ENCODE measurements at regions of chr17 and their contacts with region 1.

Region 1: DNA sequence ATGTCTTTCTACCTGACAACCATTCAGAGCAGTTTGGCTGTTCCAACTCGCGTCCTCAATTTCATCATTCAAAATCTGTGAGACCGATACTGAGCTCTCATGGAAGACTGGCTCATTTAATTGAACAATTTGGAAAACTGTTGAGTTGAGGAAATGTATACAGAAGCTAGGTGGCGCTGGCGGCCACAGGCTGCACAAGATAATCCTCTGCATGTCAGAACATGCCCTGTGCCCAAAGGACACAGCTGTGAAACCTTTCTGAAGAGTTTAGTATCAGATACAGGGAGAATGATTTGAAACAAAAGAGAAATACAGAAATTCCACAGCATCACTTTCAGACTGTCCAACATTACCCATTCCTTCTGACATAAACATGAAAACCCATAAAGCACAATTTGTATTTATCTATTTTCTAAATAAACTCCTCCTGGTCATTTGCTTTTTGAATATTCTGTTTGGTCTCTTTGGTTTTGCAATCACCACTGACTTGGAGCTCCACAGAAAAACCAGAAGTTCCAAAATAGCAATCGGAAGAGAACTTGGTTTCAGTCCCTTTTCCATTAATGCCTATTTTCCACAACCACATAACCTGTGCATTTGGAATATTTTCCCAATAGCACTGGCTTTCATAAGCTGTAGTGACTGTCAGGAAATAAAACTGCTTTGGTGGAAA is 192.8 kb downstream of the MAP2K6 start:
- DNase-seq: peak; percentile 89
- H3K4me3 ChIP-seq: no peak overlapping the region
- H3K27ac ChIP-seq: peak overlapping the region; percentile 92
- H3K4me1 ChIP-seq: peaks cover 28% of the 10 kb centered on the region
- H3K27me3 ChIP-seq: no peaks in the 10 kb centered on the region
- CTCF ChIP-seq: peak; percentile 71 to 80
- POLR2A ChIP-seq: no peak

Region 2: GRCh38 chr17:69575346-69575761 is 31.9 kb before region 1 on chr17:
- CTCF ChIA-PET with region 1: interaction called, 65 read pairs
- POLR2A ChIA-PET with region 1: no interaction called
- dilution Hi-C with region 1: no loop called
- intact Hi-C with region 1: no loop called
- DNase-seq: peak; percentile 82
- H3K4me3 ChIP-seq: no peak overlapping the region
- H3K27ac ChIP-seq: no peak overlapping the region
- H3K4me1 ChIP-seq: peaks cover 18% of the 10 kb centered on the region
- H3K27me3 ChIP-seq: peaks cover 5 to 12% of the 10 kb centered on the region in 2 experiments
- CTCF ChIP-seq: no peak
- POLR2A ChIP-seq: no peak

Region 3: DNA sequence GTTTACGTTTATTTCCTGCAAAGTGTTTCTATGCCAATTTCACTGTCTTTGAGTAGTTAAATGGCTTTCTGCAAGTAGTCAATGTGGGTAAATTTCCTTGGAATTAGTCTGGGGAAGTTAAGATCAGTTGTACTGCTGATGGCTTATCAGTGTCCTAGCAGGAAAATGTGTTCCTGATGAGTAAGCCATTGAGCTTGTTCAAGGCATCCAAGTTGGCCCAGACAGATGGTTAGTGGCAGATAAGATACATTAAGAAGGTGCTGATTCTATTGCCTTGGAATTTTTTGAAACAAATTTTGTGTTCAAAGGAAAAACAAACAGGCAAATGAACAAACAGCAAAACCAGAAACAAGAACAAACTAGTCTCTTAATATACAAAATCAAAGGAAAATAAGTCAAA is 65.6 kb after region 1 on chr17:
- CTCF ChIA-PET with region 1: interaction called, 22 read pairs
- POLR2A ChIA-PET with region 1: no interaction called
- dilution Hi-C with region 1: no loop called
- intact Hi-C with region 1: loop called (anchors 1 kb)
- DNase-seq: peak; percentile 81
- H3K4me3 ChIP-seq: no peak overlapping the region
- H3K27ac ChIP-seq: peak overlapping the region; percentile 70
- H3K4me1 ChIP-seq: peaks cover 18% of the 10 kb centered on the region
- H3K27me3 ChIP-seq: no peaks in the 10 kb centered on the region
- CTCF ChIP-seq: no peak
- POLR2A ChIP-seq: peak; percentile 65

Region 4: DNA sequence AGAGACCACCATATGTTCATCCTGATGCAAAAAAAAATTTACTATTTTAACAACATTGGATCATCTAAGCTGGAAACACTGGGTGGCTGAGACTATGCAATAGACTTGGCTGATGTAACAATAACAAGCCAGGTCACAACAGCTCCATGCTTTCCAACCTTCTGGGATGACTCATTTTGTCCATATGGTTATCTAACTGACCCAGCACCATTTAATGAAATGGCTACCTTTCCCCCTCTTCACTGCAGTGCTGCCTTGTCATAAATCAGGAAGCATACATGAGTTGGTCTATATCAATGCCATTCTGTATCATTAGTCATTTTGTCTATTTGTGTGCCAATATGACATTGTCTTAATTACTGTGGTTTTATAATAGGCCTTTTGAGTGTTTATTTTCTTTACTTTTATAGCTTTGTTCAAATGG is 250.1 kb after region 1 on chr17:
- CTCF ChIA-PET with region 1: interaction called, 6 read pairs
- POLR2A ChIA-PET with region 1: no interaction called
- dilution Hi-C with region 1: no loop called
- intact Hi-C with region 1: loop called (anchors 5 kb)
- DNase-seq: peak; percentile 95
- H3K4me3 ChIP-seq: no peak overlapping the region
- H3K27ac ChIP-seq: peak overlapping the region; percentile 35
- H3K4me1 ChIP-seq: peaks cover 14% of the 10 kb centered on the region
- H3K27me3 ChIP-seq: no peaks in the 10 kb centered on the region
- CTCF ChIP-seq: no peak
- POLR2A ChIP-seq: peak; percentile 53

Region 5: GRCh38 chr17:70123193-70123592 is 515.9 kb after region 1 on chr17:
- CTCF ChIA-PET with region 1: interaction called, 14 read pairs
- POLR2A ChIA-PET with region 1: no interaction called
- dilution Hi-C with region 1: no loop called
- intact Hi-C with region 1: no loop called
- DNase-seq: peak; percentile 56
- H3K4me3 ChIP-seq: no peak overlapping the region
- H3K27ac ChIP-seq: no peak overlapping the region
- H3K4me1 ChIP-seq: peaks cover 36% of the 10 kb centered on the region
- H3K27me3 ChIP-seq: no peaks in the 10 kb centered on the region
- CTCF ChIP-seq: no peak
- POLR2A ChIP-seq: no peak

Region 6: GRCh38 chr17:70168977-70169708 is 561.8 kb after region 1 on chr17 and contains the start of gene KCNJ2:
- CTCF ChIA-PET with region 1: interaction called, 156 read pairs
- POLR2A ChIA-PET with region 1: interaction called, 14 read pairs
- dilution Hi-C with region 1: no loop called
- intact Hi-C with region 1: loop called (anchors 1 kb)
- DNase-seq: peak; percentile 93
- H3K4me3 ChIP-seq: peak within 1 kb of the TSS; percentile 85 to 97 (median 95)
- H3K27ac ChIP-seq: peak within 1 kb of the TSS; percentile 87
- H3K4me1 ChIP-seq: peaks cover 58% of the 10 kb centered on the region
- H3K27me3 ChIP-seq: no peaks in the 10 kb centered on the region
- CTCF ChIP-seq: no peak
- POLR2A ChIP-seq: peak; percentile 95
- total RNA-seq, gene KCNJ2: 11.5 and 15.5 TPM in 2 replicates

Measured in endothelial cell of umbilical vein (primary cell).